Psoas muscle (tissue), 8 donors: ENCODE measurements at regions of chr15 and their contacts with region 1.

Region 1: DNA sequence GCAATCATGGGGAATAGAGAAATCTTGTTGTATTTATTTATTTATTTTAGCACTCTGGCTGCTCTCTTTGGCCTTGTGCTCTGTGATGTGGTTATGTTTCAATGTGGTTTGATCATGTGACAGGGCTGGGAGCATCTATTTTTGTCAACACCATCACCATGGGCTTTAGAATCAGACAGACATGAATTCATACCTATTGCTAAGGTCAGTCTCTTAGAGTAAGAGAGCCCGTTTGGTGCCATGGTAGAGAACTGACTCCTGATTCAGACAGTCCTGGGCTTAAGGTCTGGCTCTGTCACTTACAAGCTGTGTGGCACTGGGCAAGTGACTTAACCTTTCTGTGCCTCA is 157.0 kb downstream of the RYR3 start:
- DNase-seq: no peak
- ATAC-seq: peak; percentile 89 to 94 (median 92)
- H3K4me3 ChIP-seq: no peak overlapping the region
- H3K27ac ChIP-seq: peak overlapping the region; percentile 81
- H3K4me1 ChIP-seq: no peaks in the 10 kb centered on the region
- H3K27me3 ChIP-seq: no peaks in the 10 kb centered on the region
- CTCF ChIP-seq: no peak

Region 2: DNA sequence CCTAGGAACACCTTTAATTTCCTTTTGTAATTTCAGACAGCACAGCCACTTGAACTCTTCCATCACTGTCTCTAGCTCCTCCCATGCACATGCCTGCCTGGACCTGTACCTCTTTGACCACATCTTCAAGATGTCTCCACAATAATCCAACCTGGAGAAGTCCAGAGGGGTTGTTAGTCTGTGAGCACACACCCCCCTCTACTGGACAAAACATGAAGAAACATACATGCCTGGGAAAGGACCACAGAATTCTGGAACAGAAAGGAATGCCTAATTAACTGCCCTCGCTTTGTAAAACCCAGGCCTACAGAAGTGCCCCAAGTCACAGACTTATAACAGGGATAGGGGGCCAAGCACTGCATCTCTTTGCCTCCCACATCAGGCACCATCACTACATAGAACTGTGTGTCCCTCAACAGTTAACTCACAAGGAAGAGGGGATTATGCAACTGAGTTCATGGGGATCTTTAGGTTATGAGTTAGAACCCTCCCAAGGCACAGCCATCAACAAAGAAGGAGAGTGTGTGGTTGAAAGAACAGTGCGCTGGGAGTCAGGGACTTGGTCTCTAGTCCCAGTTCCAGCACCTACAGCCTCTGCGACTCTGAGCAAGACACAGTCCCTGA is 335.0 kb before region 1 on chr15:
- intact Hi-C with region 1: no loop called
- DNase-seq: no peak
- ATAC-seq: peak; percentile 62 to 78 (median 66)
- H3K4me3 ChIP-seq: no peak overlapping the region
- H3K27ac ChIP-seq: no peak overlapping the region
- H3K4me1 ChIP-seq: peaks cover 38% of the 10 kb centered on the region
- H3K27me3 ChIP-seq: no peaks in the 10 kb centered on the region
- CTCF ChIP-seq: peak; percentile 67

Region 3: GRCh38 chr15:33251362-33251761 is 216.4 kb before region 1 on chr15:
- intact Hi-C with region 1: no loop called
- DNase-seq: no peak
- ATAC-seq: no peak
- H3K4me3 ChIP-seq: no peak overlapping the region
- H3K27ac ChIP-seq: no peak overlapping the region
- H3K4me1 ChIP-seq: no peaks in the 10 kb centered on the region
- H3K27me3 ChIP-seq: no peaks in the 10 kb centered on the region
- CTCF ChIP-seq: no peak

Region 4: GRCh38 chr15:33277689-33278088 is 190.1 kb before region 1 on chr15:
- intact Hi-C with region 1: no loop called
- DNase-seq: no peak
- ATAC-seq: no peak
- H3K4me3 ChIP-seq: no peak overlapping the region
- H3K27ac ChIP-seq: no peak overlapping the region
- H3K4me1 ChIP-seq: no peaks in the 10 kb centered on the region
- H3K27me3 ChIP-seq: peaks cover 0 to 2% (median 0%) of the 10 kb centered on the region in 3 donors
- CTCF ChIP-seq: no peak

Region 5: DNA sequence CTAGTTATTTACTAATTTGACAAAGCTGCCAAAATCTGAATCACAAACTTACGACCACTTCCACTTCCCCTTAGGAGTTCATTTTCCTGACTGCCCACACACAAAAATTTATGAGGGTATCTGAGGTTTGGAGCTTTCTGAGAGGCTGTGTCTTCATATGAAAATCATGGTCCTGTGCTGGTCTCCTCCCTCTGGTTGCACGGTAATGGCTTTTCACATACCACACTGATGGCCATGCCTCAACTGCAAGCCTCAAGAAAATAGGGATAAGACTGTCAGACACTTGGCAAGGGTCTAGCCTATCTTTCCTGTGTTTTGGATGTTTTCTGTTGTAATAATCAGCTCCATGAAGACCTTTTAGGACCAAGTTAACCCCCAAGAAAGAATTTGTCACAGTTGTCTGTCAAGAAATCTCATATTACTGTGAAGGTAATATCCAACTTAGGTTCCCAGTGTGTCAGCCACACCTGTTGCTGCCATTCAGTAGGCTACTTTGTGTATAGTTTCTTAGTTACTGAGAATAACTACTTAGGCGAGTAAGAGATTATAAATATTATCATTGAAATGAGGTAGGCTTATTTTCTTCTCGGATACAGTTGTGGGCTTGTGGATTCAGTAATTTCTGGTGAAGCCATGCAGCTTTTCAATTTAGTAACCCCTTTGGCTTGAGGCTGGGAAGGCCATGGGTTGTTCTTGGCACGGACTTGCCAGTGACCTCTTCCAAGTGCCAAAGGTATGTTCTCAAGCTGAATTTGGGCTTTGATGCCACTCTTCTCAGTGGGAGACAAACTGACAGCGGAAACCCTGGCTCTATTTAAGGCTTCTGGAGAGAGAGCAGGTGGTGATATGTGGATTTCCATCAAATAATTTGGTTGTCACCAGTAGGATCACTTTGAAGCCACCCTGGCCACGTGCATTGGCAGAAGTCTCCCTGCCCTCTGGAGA is 55.9 kb before region 1 on chr15:
- intact Hi-C with region 1: loop called in 1 of 2 experiments (anchors 2 kb)
- DNase-seq: peak; percentile 40 to 63
- ATAC-seq: peak; percentile 84 to 90 (median 88)
- H3K4me3 ChIP-seq: peak overlapping the region; percentile 27
- H3K27ac ChIP-seq: peak overlapping the region; percentile 87
- H3K4me1 ChIP-seq: peaks cover 45% of the 10 kb centered on the region
- H3K27me3 ChIP-seq: no peaks in the 10 kb centered on the region
- CTCF ChIP-seq: no peak